ENCODE measurements at regions of chr5 and their contacts with region 1.

Region 1: GRCh38 chr5:73454351-73455036 is 5.9 kb upstream of the FOXD1 start:
- DNase-seq: peak; percentile 62
- ATAC-seq: peak; percentile 61
- H3K4me3 ChIP-seq: no peak overlapping the region
- H3K27ac ChIP-seq: no peak overlapping the region
- H3K4me1 ChIP-seq: no peaks in the 10 kb centered on the region; the same call in 1 of the 2 replicates
- H3K27me3 ChIP-seq: peaks cover 8% of the 10 kb centered on the region
- CTCF ChIP-seq: peak; percentile 71
- POLR2A ChIP-seq: no peak
- RAD21 ChIP-seq: peak; percentile 54

Region 2: GRCh38 chr5:72920690-72921502 is 533.6 kb before region 1 on chr5:
- CTCF ChIA-PET with region 1: no interaction called
- POLR2A ChIA-PET with region 1: no interaction called
- dilution Hi-C with region 1: no loop called
- in situ Hi-C with region 1: no loop called
- intact Hi-C with region 1: loop called (anchors 10 kb)
- DNase-seq: peak; percentile 55
- ATAC-seq: peak; percentile 71
- H3K4me3 ChIP-seq: no peak overlapping the region
- H3K27ac ChIP-seq: no peak overlapping the region
- H3K4me1 ChIP-seq: peaks cover 2% of the 10 kb centered on the region; the same call in 1 of the 2 replicates
- H3K27me3 ChIP-seq: no peaks in the 10 kb centered on the region
- CTCF ChIP-seq: peak; percentile 56
- POLR2A ChIP-seq: no peak
- RAD21 ChIP-seq: peak; percentile 66

Region 3: GRCh38 chr5:72955768-72956323 is 498.6 kb before region 1 on chr5 and contains the start of gene FCHO2:
- CTCF ChIA-PET with region 1: no interaction called
- POLR2A ChIA-PET with region 1: no interaction called
- dilution Hi-C with region 1: no loop called
- in situ Hi-C with region 1: no loop called
- intact Hi-C with region 1: loop called (anchors 5 kb)
- DNase-seq: peak; percentile 95
- ATAC-seq: peak; percentile 84
- H3K4me3 ChIP-seq: peak within 1 kb of the TSS; percentile 81
- H3K27ac ChIP-seq: peak within 1 kb of the TSS; percentile 96
- H3K4me1 ChIP-seq: peaks cover 13% of the 10 kb centered on the region
- H3K27me3 ChIP-seq: no peaks in the 10 kb centered on the region
- CTCF ChIP-seq: peak; percentile 81
- POLR2A ChIP-seq: peak; percentile 74
- RAD21 ChIP-seq: peak; percentile 61
- total RNA-seq, gene FCHO2: 13.1 and 23.5 TPM in 2 replicates

Region 4: DNA sequence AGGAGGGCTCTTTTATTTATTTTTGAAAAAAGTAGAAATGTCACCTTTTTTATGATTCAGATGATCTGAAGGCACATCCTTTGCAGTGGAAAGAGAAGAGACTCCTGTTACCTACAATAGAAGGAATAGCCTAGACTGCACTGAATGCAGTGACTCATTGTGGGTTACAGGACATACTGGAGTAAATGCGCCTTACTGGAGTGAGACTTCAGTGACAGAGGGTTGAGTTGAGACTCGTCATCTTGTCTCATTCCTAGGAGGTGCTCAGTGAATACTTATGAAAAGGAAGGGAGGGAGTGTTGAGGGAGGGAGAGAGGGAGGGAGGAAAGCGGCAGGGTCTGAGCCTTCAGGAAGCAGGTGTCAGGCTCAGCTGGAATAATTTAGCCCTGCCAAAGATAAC is 85.7 kb after region 1 on chr5:
- CTCF ChIA-PET with region 1: interaction called, 3 read pairs
- POLR2A ChIA-PET with region 1: no interaction called
- dilution Hi-C with region 1: no loop called
- in situ Hi-C with region 1: no loop called
- intact Hi-C with region 1: loop called (anchors 2 kb)
- DNase-seq: peak; percentile 90
- ATAC-seq: peak; percentile 77
- H3K4me3 ChIP-seq: no peak overlapping the region
- H3K27ac ChIP-seq: no peak overlapping the region
- H3K4me1 ChIP-seq: peaks cover 14% of the 10 kb centered on the region
- H3K27me3 ChIP-seq: no peaks in the 10 kb centered on the region
- CTCF ChIP-seq: no peak
- POLR2A ChIP-seq: no peak
- RAD21 ChIP-seq: no peak

Region 5: GRCh38 chr5:73938280-73938937 is 483.9 kb after region 1 on chr5:
- CTCF ChIA-PET with region 1: no interaction called
- POLR2A ChIA-PET with region 1: no interaction called
- dilution Hi-C with region 1: no loop called
- in situ Hi-C with region 1: no loop called
- intact Hi-C with region 1: no loop called
- DNase-seq: peak; percentile 96
- ATAC-seq: peak; percentile 96
- H3K4me3 ChIP-seq: no peak overlapping the region
- H3K27ac ChIP-seq: peak overlapping the region; percentile 48
- H3K4me1 ChIP-seq: peaks cover 10% of the 10 kb centered on the region
- H3K27me3 ChIP-seq: no peaks in the 10 kb centered on the region
- CTCF ChIP-seq: no peak
- POLR2A ChIP-seq: no peak
- RAD21 ChIP-seq: no peak

Measured in IMR-90 (cell line).